ENCODE measurements at regions of chr3 and their contacts with region 1.

Region 1: GRCh38 chr3:179037351-179037750 is 34.3 kb downstream of the ZMAT3 start:
- DNase-seq: peak; percentile 88
- H3K4me3 Mint-ChIP-seq: peak overlapping the region; percentile 65
- H3K27ac Mint-ChIP-seq: peak overlapping the region; percentile 59
- H3K4me1 Mint-ChIP-seq: peaks cover 15% of the 10 kb centered on the region
- H3K27me3 Mint-ChIP-seq: no peaks in the 10 kb centered on the region

Region 2: DNA sequence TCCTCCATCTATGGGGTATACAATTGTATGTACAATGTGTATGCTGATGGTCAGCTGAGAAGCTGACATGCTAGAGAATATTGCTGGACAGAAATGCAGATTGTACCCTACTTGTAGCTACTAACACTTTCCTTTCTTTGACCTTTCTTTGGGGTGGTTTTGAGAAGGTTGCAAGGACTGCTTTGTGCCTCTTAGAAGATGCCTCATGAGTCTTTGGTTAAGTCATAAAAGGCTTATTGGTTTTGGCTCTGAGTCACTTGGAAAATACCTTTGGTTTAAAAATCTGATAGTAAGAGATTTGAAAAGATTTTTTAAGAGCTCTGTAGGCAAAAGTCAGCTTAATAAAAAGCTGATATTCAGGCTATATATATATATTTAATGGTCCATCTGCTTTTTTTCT is 37.2 kb before region 1 on chr3:
- intact Hi-C with region 1: loop called (anchors 1 kb)
- DNase-seq: no peak
- H3K4me3 Mint-ChIP-seq: no peak overlapping the region
- H3K27ac Mint-ChIP-seq: peak overlapping the region; percentile 43
- H3K4me1 Mint-ChIP-seq: peaks cover 9% of the 10 kb centered on the region
- H3K27me3 Mint-ChIP-seq: peaks cover 8% of the 10 kb centered on the region

Region 3: DNA sequence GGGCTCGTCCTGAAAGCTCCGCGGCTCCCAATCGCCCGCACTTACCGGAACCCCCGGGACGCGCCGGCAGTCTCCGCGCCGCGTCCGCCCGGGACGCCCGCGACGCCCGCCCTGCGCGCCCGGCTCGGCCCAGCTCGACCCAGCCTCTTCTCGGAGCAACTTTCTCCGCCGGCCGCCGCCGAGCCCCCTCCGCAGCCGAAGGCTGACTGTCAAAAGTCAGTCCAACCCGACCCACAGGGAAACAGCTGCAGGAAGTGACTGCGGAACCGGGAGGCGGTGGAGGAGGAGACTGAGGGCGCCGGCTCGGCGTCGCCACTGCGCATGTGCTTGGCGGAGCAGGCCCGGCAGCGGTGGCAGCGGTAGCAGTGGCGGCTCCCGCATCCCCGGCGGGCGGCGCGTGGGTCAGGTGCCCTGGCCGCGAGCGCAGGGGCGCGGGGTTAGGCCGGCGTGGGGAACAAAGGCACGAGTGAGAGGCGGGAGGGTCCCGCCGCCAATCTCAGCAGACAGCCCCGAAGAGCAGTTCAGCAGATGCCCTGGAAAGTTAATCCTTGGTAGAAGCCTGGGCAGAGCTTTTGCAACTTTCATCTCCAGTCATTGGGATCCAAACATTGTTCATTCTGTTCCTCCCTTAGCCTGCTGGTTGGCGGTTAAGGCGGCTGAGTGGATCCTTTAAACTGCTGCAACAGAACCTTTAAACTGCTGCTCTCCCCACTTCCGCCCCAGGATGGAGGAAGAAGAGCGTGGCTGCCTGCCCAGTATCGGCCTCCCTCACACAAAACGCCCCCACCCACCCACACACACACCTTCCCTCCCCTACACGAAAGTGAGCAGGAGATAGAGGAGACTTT is 34.4 kb after region 1 on chr3 and contains the start of gene ZMAT3:
- intact Hi-C with region 1: loop called (anchors 2 kb)
- DNase-seq: peak; percentile 96
- H3K4me3 Mint-ChIP-seq: peak within 1 kb of the TSS; percentile 99
- H3K27ac Mint-ChIP-seq: peak within 1 kb of the TSS; percentile 96
- H3K4me1 Mint-ChIP-seq: peaks cover 35% of the 10 kb centered on the region
- H3K27me3 Mint-ChIP-seq: no peaks in the 10 kb centered on the region
- total RNA-seq, gene ZMAT3: 11.8 and 13.1 TPM in 2 replicates

Measured in activated CD4-positive, alpha-beta T cell treated with anti-CD3 and anti-CD28 coated beads, Interleukin-2, amount 10 ng/mL, durations not matched to agents 24 days and 14 days (primary cell).